Activated naive CD4-positive, alpha-beta T cell treated with anti-CD3 and anti-CD28 coated beads for 36 hours (primary cell): ENCODE measurements at regions of chr12 and their contacts with region 1.

Region 1: DNA sequence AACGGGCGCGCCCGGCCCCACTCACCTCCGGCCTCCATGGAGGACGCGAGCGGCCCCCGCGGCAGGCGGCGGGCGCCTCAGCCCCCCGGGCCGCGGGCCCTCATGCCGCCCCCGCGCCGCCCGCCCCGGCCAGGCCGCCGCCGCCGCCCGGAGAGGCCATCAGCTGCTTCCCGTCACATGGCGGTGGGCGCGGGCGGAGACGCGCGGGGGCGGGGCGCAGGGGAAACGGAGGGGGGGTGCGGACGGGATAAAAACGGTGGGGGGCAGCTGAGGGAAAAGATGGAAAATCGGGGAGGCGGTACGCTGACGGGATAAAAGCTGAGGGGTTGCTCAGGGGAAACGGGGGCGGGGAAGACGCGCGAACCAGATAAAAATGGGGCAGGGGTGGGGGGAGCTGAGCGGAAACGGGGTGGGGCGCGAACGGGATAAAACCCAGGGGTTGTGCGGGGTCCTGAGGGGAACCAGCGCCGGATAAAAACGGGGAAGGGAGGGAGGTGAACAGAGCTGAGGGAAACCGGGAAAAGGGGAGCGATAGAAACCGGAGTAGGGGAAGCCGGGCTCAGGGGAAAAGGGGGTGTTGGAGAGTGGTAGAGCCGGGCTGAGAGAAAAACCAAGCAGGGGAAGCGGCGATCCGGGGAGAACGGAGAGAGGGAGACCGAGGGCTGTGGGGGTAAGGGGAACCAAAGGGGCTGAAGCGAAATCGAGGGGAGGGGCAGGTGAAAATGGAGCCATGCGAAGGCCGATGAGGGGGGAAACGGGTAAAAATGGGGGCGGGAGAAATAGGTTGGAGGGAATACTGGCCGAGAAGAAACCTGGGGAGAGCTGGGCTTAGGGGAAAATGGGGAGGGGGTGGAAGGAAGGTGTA is at the start of gene WSB2:
- DNase-seq: peak; percentile 51
- H3K4me3 Mint-ChIP-seq: peak within 1 kb of the TSS; percentile 90
- H3K27ac Mint-ChIP-seq: peak within 1 kb of the TSS; percentile 91
- H3K4me1 Mint-ChIP-seq: peaks cover 45% of the 10 kb centered on the region
- H3K27me3 Mint-ChIP-seq: peaks cover 5% of the 10 kb centered on the region
- total RNA-seq, gene WSB2: 31.0 to 31.7 TPM

Region 2: DNA sequence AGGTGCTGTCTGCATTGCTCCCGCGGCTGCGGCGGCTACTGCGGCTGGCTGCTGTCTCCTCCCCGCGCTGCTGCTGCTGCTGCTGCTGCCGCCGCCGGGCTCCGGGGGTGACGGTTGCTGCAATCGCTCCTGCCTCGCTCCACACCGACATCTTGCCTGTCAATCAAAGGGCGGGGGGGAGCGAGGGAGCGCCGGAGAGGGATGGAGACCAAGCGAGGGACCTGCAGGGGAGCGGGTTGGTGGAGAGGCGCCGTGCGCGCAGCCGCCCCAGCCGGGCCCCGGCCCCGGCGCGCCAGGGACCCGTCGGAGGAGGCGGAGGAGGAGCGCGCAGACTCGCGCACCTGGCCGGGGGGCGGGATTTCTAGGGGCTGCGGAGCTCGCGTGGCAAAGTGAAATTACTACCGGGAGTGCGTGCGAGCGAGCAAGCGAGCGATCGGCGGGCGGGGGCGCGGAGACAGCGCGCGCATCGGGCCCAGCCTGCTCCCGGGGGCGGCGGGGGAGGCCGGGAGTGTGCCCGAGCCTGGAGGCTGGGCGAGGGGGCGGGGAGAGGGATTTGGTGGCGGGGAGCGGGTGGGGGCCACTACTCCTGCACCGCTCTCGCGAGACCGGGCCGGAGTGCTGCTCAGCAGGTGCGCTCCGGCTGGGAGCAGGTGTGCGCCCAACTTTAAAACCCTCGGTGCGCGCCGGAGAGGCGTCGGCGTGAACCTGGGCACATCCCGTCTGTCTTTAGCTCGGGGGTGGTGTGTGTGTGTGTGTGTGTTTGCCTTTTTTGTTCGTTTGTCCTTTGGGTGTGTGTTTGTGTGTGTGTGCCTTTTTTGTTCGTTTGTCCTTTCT is 92.2 kb before region 1 on chr12 and contains the start of gene KSR2:
- CTCF ChIA-PET with region 1: no interaction called
- intact Hi-C with region 1: loop called (anchors 5 kb)
- DNase-seq: peak; percentile 53
- H3K4me3 Mint-ChIP-seq: peak within 1 kb of the TSS; percentile 79
- H3K27ac Mint-ChIP-seq: no peak within 1 kb of the TSS
- H3K4me1 Mint-ChIP-seq: peaks cover 8% of the 10 kb centered on the region
- H3K27me3 Mint-ChIP-seq: peaks cover 62% of the 10 kb centered on the region
- total RNA-seq, gene KSR2: 0.05 TPM in 1 of 2 experiments, not detected in the other

Region 3: DNA sequence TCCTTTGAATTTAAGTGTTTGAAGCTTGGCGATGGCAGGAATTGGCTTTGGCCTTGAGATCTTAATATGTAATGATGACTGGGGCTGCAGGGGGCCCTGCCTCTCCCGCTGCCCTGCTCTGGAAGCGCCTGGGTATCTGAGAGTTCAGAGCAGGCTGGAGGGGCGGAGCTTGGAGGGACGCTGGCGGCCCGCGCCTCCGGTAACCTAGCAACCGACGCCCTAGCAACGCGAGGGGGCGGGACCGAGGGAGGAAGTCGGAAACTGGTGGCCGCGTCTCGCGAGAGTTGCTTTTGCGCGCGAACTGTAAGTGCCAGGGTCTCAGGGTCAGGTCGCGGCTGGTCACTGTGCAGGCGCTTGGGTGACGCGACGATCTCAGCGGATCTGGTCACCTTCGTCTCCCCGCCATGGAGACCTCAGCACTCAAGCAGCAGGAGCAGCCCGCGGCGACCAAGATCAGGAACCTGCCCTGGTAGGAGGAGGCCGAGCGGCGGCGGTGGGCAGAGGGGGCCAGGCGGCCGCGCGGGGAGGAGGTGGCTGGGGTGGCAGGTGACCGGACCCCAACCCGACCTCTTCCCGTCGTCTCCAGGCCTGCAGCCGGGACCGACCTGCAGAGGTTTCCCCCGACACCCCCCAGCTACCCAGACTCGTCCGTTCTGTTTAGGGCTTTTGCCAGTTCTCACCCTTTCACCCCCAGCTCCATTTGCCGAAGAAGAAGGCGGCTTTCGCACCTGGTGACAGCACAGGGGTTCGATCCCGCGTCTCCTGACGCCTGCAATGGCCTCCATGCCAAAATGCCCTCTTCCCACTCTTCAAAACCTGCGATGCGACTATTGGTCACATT is 44.6 kb before region 1 on chr12 and contains the start of gene RFC5:
- CTCF ChIA-PET with region 1: interaction called, 3 read pairs
- intact Hi-C with region 1: loop called (anchors 1 kb)
- DNase-seq: peak; percentile 98
- H3K4me3 Mint-ChIP-seq: peak within 1 kb of the TSS; percentile 96
- H3K27ac Mint-ChIP-seq: peak within 1 kb of the TSS; percentile 88
- H3K4me1 Mint-ChIP-seq: peaks cover 19% of the 10 kb centered on the region
- H3K27me3 Mint-ChIP-seq: no peaks in the 10 kb centered on the region
- total RNA-seq, gene RFC5: 62.0 to 62.5 TPM

Region 4: GRCh38 chr12:118120579-118121363 is 59.5 kb after region 1 on chr12:
- CTCF ChIA-PET with region 1: interaction called, 4 read pairs
- intact Hi-C with region 1: loop called (anchors 5 kb)
- DNase-seq: peak; percentile 80
- H3K4me3 Mint-ChIP-seq: no peak overlapping the region
- H3K27ac Mint-ChIP-seq: no peak overlapping the region
- H3K4me1 Mint-ChIP-seq: peaks cover 5% of the 10 kb centered on the region
- H3K27me3 Mint-ChIP-seq: no peaks in the 10 kb centered on the region

Region 5: DNA sequence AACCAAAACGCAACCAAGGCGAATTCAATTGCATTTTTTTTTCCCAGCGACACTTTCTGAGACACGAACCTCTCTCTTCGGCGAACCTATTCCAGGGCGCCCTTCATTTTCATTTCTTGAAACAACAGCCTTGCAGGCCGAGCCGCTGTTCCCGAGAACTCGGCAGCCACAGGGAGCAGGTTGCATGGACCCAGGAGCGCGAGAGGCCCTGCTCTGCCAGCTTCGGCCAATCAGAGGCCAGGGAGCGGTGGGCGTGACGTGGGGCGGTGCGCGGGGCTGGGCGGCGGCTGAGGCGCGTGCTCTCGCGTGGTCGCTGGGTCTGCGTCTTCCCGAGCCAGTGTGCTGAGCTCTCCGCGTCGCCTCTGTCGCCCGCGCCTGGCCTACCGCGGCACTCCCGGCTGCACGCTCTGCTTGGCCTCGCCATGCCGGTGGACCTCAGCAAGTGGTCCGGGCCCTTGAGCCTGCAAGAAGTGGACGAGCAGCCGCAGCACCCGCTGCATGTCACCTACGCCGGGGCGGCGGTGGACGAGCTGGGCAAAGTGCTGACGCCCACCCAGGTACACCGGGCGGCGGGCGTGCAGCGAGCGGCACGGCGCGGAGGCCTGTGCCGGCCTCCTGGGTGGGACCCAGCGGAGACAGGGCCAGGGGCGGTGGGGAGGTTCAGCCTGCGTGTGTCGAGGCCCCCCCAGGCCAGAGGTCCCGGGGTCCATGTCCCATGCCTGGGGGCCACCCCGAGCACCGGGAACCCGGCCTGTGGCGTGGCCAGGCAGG is 74.7 kb after region 1 on chr12 and contains the start of gene PEBP1:
- CTCF ChIA-PET with region 1: interaction called, 3 read pairs
- intact Hi-C with region 1: loop called (anchors 2 kb)
- DNase-seq: peak; percentile 95
- H3K4me3 Mint-ChIP-seq: peak within 1 kb of the TSS; percentile 98
- H3K27ac Mint-ChIP-seq: peak within 1 kb of the TSS; percentile 83
- H3K4me1 Mint-ChIP-seq: peaks cover 31% of the 10 kb centered on the region
- H3K27me3 Mint-ChIP-seq: no peaks in the 10 kb centered on the region
- total RNA-seq, gene PEBP1: 117 to 120 TPM